ENCODE measurements at regions of chr4 and their contacts with region 1.

Region 1: DNA sequence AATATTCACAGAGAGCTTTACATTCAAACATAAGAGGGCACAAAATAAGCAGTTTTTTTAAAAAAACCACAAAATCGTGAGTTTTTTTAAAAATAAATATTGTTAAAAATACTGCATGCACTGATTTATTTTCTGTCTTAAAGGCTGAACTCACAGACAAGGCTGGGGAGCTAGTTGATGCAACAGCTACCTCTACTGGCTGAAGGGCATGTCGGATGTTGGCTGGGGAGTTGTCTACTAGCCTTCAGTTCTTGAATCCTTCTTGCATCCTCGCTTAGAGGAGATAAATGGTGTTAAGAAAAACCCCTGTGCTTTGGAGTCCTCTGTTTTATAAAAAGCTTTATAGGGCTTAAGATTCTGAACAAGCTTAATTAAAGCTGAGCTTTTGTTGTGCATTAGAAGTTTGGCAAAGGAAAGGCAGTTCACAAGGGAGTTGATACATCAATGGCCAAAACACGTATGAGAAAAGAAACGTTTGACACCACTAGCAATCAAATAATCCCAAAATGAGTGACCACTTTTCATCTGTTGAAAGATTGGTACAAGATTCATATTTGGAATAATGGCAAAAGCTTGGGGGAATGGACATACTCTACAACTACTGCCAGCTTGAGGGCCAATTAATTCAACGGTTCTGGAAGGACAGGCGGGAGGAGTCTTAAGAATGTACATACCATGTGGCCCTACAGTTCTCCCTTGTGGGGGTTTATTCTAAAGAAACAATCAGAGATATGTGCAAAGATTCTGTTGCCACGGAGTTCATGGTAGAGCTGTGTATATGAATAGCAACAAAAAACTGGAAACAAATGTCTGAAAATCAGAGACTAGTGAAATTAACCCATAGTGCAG is 94.7 kb downstream of the SEL1L3 start:
- DNase-seq: peak; percentile 26 to 66
- ATAC-seq: peak; percentile 80 to 89; a peak in 4 of 6 replicates
- H3K4me3 ChIP-seq: no peak overlapping the region
- H3K27ac ChIP-seq: no peak overlapping the region
- H3K4me1 ChIP-seq: no peaks in the 10 kb centered on the region
- CTCF ChIP-seq: peak; percentile 74
- EP300 ChIP-seq: no peak
- POLR2A ChIP-seq: no peak
- RAD21 ChIP-seq: peak; percentile 84 to 89

Region 2: GRCh38 chr4:25433966-25434827 is 333.9 kb before region 1 on chr4:
- CTCF ChIA-PET with region 1: interaction called, 207 read pairs
- POLR2A ChIA-PET with region 1: interaction called, 3 read pairs
- DNase-seq: no peak
- ATAC-seq: no peak
- H3K4me3 ChIP-seq: no peak overlapping the region
- H3K27ac ChIP-seq: no peak overlapping the region
- H3K4me1 ChIP-seq: no peaks in the 10 kb centered on the region
- CTCF ChIP-seq: no peak
- EP300 ChIP-seq: no peak
- POLR2A ChIP-seq: no peak
- RAD21 ChIP-seq: no peak

Region 3: GRCh38 chr4:25756503-25756902 is 11.6 kb before region 1 on chr4:
- CTCF ChIA-PET with region 1: interaction called, 16 read pairs
- POLR2A ChIA-PET with region 1: no interaction called
- DNase-seq: no peak
- ATAC-seq: no peak
- H3K4me3 ChIP-seq: no peak overlapping the region
- H3K27ac ChIP-seq: no peak overlapping the region
- H3K4me1 ChIP-seq: no peaks in the 10 kb centered on the region
- CTCF ChIP-seq: no peak
- EP300 ChIP-seq: no peak
- POLR2A ChIP-seq: no peak
- RAD21 ChIP-seq: no peak

Measured in A549 (cell line).